Aorta (tissue), 5 donors: ENCODE measurements at regions of chr4 and their contacts with region 1.

Region 1: GRCh38 chr4:106395582-106395981 is 27.0 kb upstream of the GIMD1 start:
- DNase-seq: no peak
- ATAC-seq: no peak
- H3K4me3 ChIP-seq: no peak overlapping the region
- H3K27ac ChIP-seq: no peak overlapping the region
- H3K4me1 ChIP-seq: no peaks in the 10 kb centered on the region
- H3K27me3 ChIP-seq: no peaks in the 10 kb centered on the region

Region 2: GRCh38 chr4:105369988-105370387 is 1025.6 kb before region 1 on chr4:
- intact Hi-C with region 1: loop called in 1 of 2 experiments (anchors 10 kb)
- DNase-seq: no peak
- ATAC-seq: no peak
- H3K4me3 ChIP-seq: no peak overlapping the region
- H3K27ac ChIP-seq: no peak overlapping the region
- H3K4me1 ChIP-seq: no peaks in the 10 kb centered on the region
- H3K27me3 ChIP-seq: no peaks in the 10 kb centered on the region

Region 3: DNA sequence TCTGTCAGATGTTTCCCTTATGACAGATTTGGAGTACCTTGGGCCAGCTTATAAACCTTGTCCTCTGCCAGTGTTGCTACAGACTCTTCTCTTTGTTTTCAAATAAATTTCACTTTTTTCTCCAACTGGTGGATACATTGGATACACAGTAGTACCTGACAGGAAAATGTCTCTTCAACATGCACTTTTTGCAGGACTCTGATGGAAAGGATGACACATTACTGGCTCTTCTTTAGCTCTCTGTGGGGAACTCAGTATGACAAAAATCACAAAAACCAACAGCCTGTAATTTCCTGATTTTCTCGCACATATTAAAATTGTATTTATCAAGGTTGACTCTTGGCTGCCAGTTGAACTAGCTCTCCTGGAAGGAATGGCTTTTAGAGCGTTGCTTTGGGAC is 34.3 kb after region 1 on chr4:
- intact Hi-C with region 1: loop called in 1 of 2 experiments (anchors 2 kb)
- DNase-seq: no peak
- ATAC-seq: no peak
- H3K4me3 ChIP-seq: no peak overlapping the region
- H3K27ac ChIP-seq: no peak overlapping the region
- H3K4me1 ChIP-seq: no peaks in the 10 kb centered on the region
- H3K27me3 ChIP-seq: no peaks in the 10 kb centered on the region